B cell (primary cell): ENCODE measurements at regions of chr12 and their contacts with region 1.

Region 1: DNA sequence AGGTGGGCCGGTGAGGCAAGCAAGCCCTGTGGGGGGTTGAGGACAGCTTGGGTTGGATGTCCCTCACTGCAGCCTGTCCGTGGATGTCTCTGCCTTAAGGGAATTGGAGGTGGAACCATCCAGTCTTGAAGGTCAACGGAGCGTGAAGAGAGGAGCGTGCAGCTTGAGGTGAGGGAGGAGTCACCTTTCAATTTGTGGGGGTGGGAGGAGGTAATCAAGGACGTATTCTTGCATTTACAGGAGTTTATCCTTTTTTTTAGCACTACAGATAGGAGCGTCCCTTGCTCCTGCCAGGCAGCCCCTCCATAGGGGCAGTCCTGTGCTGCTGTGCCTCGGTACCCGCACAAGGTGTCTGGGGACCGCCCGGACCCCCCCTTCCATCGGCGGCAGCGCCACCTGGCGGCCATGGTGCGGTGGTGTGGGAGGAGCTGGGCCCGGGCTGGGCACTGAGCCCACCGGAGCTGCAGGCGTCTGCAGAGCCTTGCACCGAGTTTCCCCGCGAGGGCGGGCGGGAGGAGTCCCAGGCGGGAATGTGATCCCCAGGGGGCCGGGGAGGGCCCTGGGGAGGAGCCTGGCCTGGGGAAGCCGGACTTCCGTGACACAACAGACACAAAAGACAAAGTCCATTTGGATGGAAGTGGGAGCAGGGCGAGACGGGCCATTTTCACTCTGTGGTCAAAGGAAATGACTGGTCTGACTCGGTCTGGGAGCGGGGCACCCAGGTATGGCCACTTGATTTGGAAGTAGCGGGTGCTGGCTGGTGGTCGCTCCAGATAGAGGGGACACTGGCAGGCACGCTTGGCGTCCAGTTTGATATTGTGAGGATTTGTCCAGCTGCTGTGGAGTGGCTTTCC is 923 bp downstream of the DNAJC22 start:
- DNase-seq: peak; percentile 83
- ATAC-seq: peak; percentile 69
- H3K4me3 ChIP-seq: peak overlapping the region; percentile 11 to 61 (median 39)
- H3K4me3 Mint-ChIP-seq: peak overlapping the region; percentile 90
- H3K27ac ChIP-seq: no peak overlapping the region
- H3K27ac Mint-ChIP-seq: no peak overlapping the region
- H3K4me1 ChIP-seq: peaks cover 56 to 60% of the 10 kb centered on the region in 2 donors
- H3K4me1 Mint-ChIP-seq: peaks cover 51% of the 10 kb centered on the region
- H3K27me3 ChIP-seq: peaks cover 0 to 82% (median 61%) of the 10 kb centered on the region in 4 experiments
- H3K27me3 Mint-ChIP-seq: peaks cover 53% of the 10 kb centered on the region
- CTCF ChIP-seq: peak; percentile 99

Region 2: GRCh38 chr12:49253088-49253487 is 94.5 kb before region 1 on chr12:
- CTCF ChIA-PET with region 1: no interaction called
- POLR2A ChIA-PET with region 1: no interaction called
- intact Hi-C with region 1: no loop called
- DNase-seq: no peak
- ATAC-seq: no peak
- H3K4me3 ChIP-seq: no peak overlapping the region
- H3K4me3 Mint-ChIP-seq: no peak overlapping the region
- H3K27ac ChIP-seq: no peak overlapping the region
- H3K27ac Mint-ChIP-seq: no peak overlapping the region
- H3K4me1 ChIP-seq: no peaks in the 10 kb centered on the region
- H3K4me1 Mint-ChIP-seq: peaks cover 1% of the 10 kb centered on the region
- H3K27me3 ChIP-seq: no peaks in the 10 kb centered on the region
- H3K27me3 Mint-ChIP-seq: no peaks in the 10 kb centered on the region
- CTCF ChIP-seq: no peak

Region 3: GRCh38 chr12:49296034-49296835 is 51.4 kb before region 1 on chr12:
- CTCF ChIA-PET with region 1: interaction called, 139 read pairs
- POLR2A ChIA-PET with region 1: interaction called, 4 read pairs
- intact Hi-C with region 1: no loop called
- DNase-seq: peak; percentile 79
- ATAC-seq: peak; percentile 62
- H3K4me3 ChIP-seq: peak overlapping the region in 3 of 5 experiments; percentile 24 to 42 (median 29)
- H3K4me3 Mint-ChIP-seq: peak overlapping the region; percentile 79
- H3K27ac ChIP-seq: no peak overlapping the region
- H3K27ac Mint-ChIP-seq: no peak overlapping the region
- H3K4me1 ChIP-seq: peaks cover 30 to 40% of the 10 kb centered on the region in 2 donors
- H3K4me1 Mint-ChIP-seq: peaks cover 27% of the 10 kb centered on the region
- H3K27me3 ChIP-seq: peaks cover 0 to 67% (median 34%) of the 10 kb centered on the region in 4 experiments
- H3K27me3 Mint-ChIP-seq: peaks cover 48% of the 10 kb centered on the region
- CTCF ChIP-seq: peak; percentile 80

Region 4: GRCh38 chr12:49322708-49323523 is 24.7 kb before region 1 on chr12 and contains the start of gene TROAP:
- CTCF ChIA-PET with region 1: interaction called, 20 read pairs
- POLR2A ChIA-PET with region 1: interaction called, 9 read pairs
- intact Hi-C with region 1: no loop called
- DNase-seq: peak; percentile 98
- ATAC-seq: peak; percentile 99
- H3K4me3 ChIP-seq: peak within 1 kb of the TSS; percentile 66 to 85 (median 70)
- H3K4me3 Mint-ChIP-seq: peak within 1 kb of the TSS; percentile 99
- H3K27ac ChIP-seq: peak within 1 kb of the TSS; percentile 40 to 74
- H3K27ac Mint-ChIP-seq: peak within 1 kb of the TSS; percentile 85
- H3K4me1 ChIP-seq: peaks cover 12 to 18% of the 10 kb centered on the region in 2 donors
- H3K4me1 Mint-ChIP-seq: peaks cover 23% of the 10 kb centered on the region
- H3K27me3 ChIP-seq: no peaks in the 10 kb centered on the region
- H3K27me3 Mint-ChIP-seq: no peaks in the 10 kb centered on the region
- CTCF ChIP-seq: no peak
- total RNA-seq, gene TROAP: 1.0 and 1.7 TPM in 2 replicates

Region 5: GRCh38 chr12:49336645-49337584 is 10.7 kb before region 1 on chr12 and contains the start of gene C1QL4:
- CTCF ChIA-PET with region 1: interaction called, 95 read pairs
- POLR2A ChIA-PET with region 1: interaction called, 3 read pairs
- intact Hi-C with region 1: loop called (anchors 1 kb)
- DNase-seq: peak; percentile 91
- ATAC-seq: peak; percentile 98
- H3K4me3 ChIP-seq: peak within 1 kb of the TSS in 4 of 5 experiments; percentile 21 to 50 (median 46)
- H3K4me3 Mint-ChIP-seq: peak within 1 kb of the TSS; percentile 80
- H3K27ac ChIP-seq: no peak within 1 kb of the TSS
- H3K27ac Mint-ChIP-seq: peak within 1 kb of the TSS; percentile 61
- H3K4me1 ChIP-seq: peaks cover 38 to 39% of the 10 kb centered on the region in 2 donors
- H3K4me1 Mint-ChIP-seq: peaks cover 38% of the 10 kb centered on the region
- H3K27me3 ChIP-seq: peaks cover 0 to 86% (median 49%) of the 10 kb centered on the region in 4 experiments
- H3K27me3 Mint-ChIP-seq: peaks cover 66% of the 10 kb centered on the region
- CTCF ChIP-seq: peak; percentile 99
- total RNA-seq, gene C1QL4: not detected in 2 replicates

Region 6: DNA sequence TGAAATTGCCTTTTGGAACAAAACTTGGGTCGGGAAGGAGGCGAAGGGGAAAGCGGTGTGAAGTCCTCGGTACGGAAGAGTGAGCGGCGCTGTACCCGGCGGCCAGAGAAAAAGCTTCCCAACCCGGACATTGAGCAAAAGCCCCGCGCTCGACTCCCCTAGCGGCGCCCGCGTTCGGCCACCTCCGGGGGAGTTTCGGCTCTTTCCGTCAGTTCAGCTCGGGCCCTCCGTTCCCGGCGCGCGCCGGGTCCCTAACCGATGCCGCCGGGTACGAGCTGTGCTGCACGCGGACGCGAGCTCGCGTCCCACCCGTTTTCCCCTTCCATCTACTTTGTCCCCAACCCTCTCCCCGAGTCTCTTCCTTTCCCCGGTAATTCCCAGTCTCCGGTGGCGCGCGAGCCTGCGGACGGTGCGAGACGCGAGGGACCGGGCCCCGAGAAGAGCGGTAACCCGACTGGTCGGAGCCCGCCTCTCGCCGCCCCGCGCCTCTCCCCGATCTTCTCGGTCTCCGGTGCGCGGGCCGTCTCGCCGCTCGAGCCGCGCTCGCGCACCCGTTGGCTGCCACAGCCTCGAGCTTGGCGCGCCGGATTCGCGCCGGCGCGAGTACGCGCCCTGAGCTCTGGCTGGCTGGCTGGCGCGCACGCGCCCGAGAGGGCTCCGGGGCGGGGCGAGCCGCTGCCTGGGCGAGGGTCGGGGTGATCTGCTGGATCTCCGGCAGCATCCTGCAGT is 19.2 kb after region 1 on chr12:
- CTCF ChIA-PET with region 1: interaction called, 25 read pairs
- POLR2A ChIA-PET with region 1: interaction called, 8 read pairs
- intact Hi-C with region 1: no loop called
- DNase-seq: peak; percentile 90
- ATAC-seq: peak; percentile 78
- H3K4me3 ChIP-seq: peak overlapping the region; percentile 61 to 96 (median 80)
- H3K4me3 Mint-ChIP-seq: peak overlapping the region; percentile 87
- H3K27ac ChIP-seq: peak overlapping the region; percentile 90 to 91
- H3K27ac Mint-ChIP-seq: peak overlapping the region; percentile 98
- H3K4me1 ChIP-seq: peaks cover 33 to 39% of the 10 kb centered on the region in 2 donors
- H3K4me1 Mint-ChIP-seq: peaks cover 46% of the 10 kb centered on the region
- H3K27me3 ChIP-seq: no peaks in the 10 kb centered on the region
- H3K27me3 Mint-ChIP-seq: no peaks in the 10 kb centered on the region
- CTCF ChIP-seq: peak; percentile 44

Region 7: DNA sequence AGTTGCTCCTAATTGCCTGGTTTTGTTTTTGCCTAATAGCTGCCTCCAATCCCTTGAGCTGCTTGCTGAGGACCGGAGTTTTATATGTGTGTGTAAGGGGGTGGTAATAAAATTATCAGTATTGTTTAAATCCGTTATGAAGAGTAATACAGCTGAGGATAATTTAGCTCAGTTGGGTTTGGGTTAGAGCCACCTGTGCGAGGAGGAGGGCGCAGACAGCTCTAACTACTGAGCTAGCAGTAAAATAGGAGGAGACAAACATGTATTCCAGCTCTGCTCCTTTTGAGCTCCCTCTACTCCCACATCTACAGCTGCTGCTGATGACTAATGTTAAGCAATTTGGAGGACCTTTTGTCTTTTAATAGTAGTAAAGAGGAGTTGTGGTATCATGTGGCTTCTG is 81.2 kb after region 1 on chr12:
- CTCF ChIA-PET with region 1: no interaction called
- POLR2A ChIA-PET with region 1: no interaction called
- intact Hi-C with region 1: no loop called
- DNase-seq: peak; percentile 44
- ATAC-seq: no peak
- H3K4me3 ChIP-seq: peak overlapping the region in 2 of 5 experiments; percentile 8 to 42
- H3K4me3 Mint-ChIP-seq: peak overlapping the region; percentile 52
- H3K27ac ChIP-seq: peak overlapping the region; percentile 62 to 82
- H3K27ac Mint-ChIP-seq: peak overlapping the region; percentile 76
- H3K4me1 ChIP-seq: peaks cover 5 to 9% of the 10 kb centered on the region in 2 donors
- H3K4me1 Mint-ChIP-seq: peaks cover 23% of the 10 kb centered on the region
- H3K27me3 ChIP-seq: no peaks in the 10 kb centered on the region
- H3K27me3 Mint-ChIP-seq: no peaks in the 10 kb centered on the region
- CTCF ChIP-seq: no peak

Region 8: GRCh38 chr12:49636979-49637755 is 289.6 kb after region 1 on chr12:
- CTCF ChIA-PET with region 1: no interaction called
- POLR2A ChIA-PET with region 1: no interaction called
- intact Hi-C with region 1: no loop called
- DNase-seq: peak; percentile 67
- ATAC-seq: peak; percentile 92
- H3K4me3 ChIP-seq: no peak overlapping the region
- H3K4me3 Mint-ChIP-seq: no peak overlapping the region
- H3K27ac ChIP-seq: no peak overlapping the region
- H3K27ac Mint-ChIP-seq: peak overlapping the region; percentile 67
- H3K4me1 ChIP-seq: peaks cover 13 to 18% of the 10 kb centered on the region in 2 donors
- H3K4me1 Mint-ChIP-seq: peaks cover 21% of the 10 kb centered on the region
- H3K27me3 ChIP-seq: no peaks in the 10 kb centered on the region
- H3K27me3 Mint-ChIP-seq: no peaks in the 10 kb centered on the region
- CTCF ChIP-seq: peak; percentile 77